ENCODE measurements at regions of chr3 and their contacts with region 1.

Region 1: GRCh38 chr3:151146071-151146730 is 56.8 kb downstream of the GPR171 start:
- DNase-seq: peak; percentile 82
- H3K4me3 Mint-ChIP-seq: no peak overlapping the region
- H3K27ac Mint-ChIP-seq: peak overlapping the region; percentile 28
- H3K4me1 Mint-ChIP-seq: no peaks in the 10 kb centered on the region
- H3K27me3 Mint-ChIP-seq: no peaks in the 10 kb centered on the region
- CTCF ChIP-seq: peak; percentile 90

Region 2: GRCh38 chr3:150721285-150722130 is 424.7 kb before region 1 on chr3:
- CTCF ChIA-PET with region 1: interaction called, 13 read pairs
- POLR2A ChIA-PET with region 1: no interaction called
- intact Hi-C with region 1: loop called (anchors 1 kb)
- DNase-seq: peak; percentile 65
- H3K4me3 Mint-ChIP-seq: no peak overlapping the region
- H3K27ac Mint-ChIP-seq: no peak overlapping the region
- H3K4me1 Mint-ChIP-seq: peaks cover 16% of the 10 kb centered on the region
- H3K27me3 Mint-ChIP-seq: no peaks in the 10 kb centered on the region
- CTCF ChIP-seq: peak; percentile 77

Region 3: GRCh38 chr3:150870396-150870795 is 275.8 kb before region 1 on chr3:
- CTCF ChIA-PET with region 1: no interaction called
- POLR2A ChIA-PET with region 1: no interaction called
- intact Hi-C with region 1: loop called (anchors 5 kb)
- DNase-seq: no peak
- H3K4me3 Mint-ChIP-seq: no peak overlapping the region
- H3K27ac Mint-ChIP-seq: no peak overlapping the region
- H3K4me1 Mint-ChIP-seq: peaks cover 2% of the 10 kb centered on the region
- H3K27me3 Mint-ChIP-seq: no peaks in the 10 kb centered on the region
- CTCF ChIP-seq: no peak

Region 4: DNA sequence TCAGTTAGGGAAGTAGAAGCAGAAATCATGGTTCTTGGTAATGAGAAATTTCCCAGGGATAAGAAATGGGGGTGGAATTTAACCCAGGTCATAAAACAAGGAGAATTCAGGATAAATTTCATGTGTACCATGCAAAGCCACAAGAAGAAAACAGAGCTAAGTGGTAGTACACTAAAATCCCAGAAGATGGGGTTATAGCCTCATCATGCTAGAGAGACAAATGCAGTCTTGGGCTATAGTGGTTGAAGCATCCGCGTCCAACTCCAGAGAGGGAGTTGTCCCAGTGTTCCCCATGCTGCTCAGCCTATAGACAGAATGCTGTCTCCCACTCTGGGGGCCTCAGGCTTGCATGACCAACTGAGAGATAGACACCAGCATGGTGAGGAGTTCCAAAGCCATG is 137.5 kb before region 1 on chr3:
- CTCF ChIA-PET with region 1: interaction called, 5 read pairs
- POLR2A ChIA-PET with region 1: no interaction called
- intact Hi-C with region 1: loop called (anchors 1 kb)
- DNase-seq: peak; percentile 27
- H3K4me3 Mint-ChIP-seq: no peak overlapping the region
- H3K27ac Mint-ChIP-seq: no peak overlapping the region
- H3K4me1 Mint-ChIP-seq: peaks cover under 1% of the 10 kb centered on the region
- H3K27me3 Mint-ChIP-seq: no peaks in the 10 kb centered on the region
- CTCF ChIP-seq: peak; percentile 21

Region 5: GRCh38 chr3:151135541-151136337 is 10.5 kb before region 1 on chr3:
- CTCF ChIA-PET with region 1: interaction called, 17 read pairs
- POLR2A ChIA-PET with region 1: no interaction called
- intact Hi-C with region 1: no loop called
- DNase-seq: peak; percentile 5
- H3K4me3 Mint-ChIP-seq: no peak overlapping the region
- H3K27ac Mint-ChIP-seq: no peak overlapping the region
- H3K4me1 Mint-ChIP-seq: peaks cover 2% of the 10 kb centered on the region
- H3K27me3 Mint-ChIP-seq: no peaks in the 10 kb centered on the region
- CTCF ChIP-seq: no peak